Heart right ventricle (tissue), 16 donors: ENCODE measurements at regions of chr5 and their contacts with region 1.

Region 1: DNA sequence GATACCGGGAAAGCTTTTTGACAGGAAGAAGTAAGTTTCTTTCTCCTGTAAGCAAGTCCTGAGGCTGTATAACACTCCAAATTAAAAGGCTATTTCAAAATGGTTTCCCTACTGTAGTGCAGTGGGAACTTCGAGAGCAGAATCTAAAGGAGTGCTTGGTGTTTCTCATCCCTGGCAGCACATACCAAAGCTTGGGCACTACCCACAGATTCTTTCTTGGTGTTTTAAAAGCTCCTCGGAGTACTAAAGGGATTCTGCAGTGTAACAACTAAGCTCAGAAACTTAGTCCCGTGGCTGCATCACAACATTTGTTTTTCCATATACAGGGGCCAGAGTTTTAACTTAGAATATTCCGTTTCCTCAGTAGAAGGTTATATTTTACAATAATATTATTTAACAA is 5.6 kb upstream of the APC start:
- DNase-seq: no peak
- ATAC-seq: no peak
- H3K4me3 ChIP-seq: no peak overlapping the region
- H3K27ac ChIP-seq: no peak overlapping the region
- H3K4me1 ChIP-seq: peaks cover 0 to 14% (median 9%) of the 10 kb centered on the region in 9 donors
- H3K27me3 ChIP-seq: no peaks in the 10 kb centered on the region
- CTCF ChIP-seq: no peak

Region 2: GRCh38 chr5:112663146-112663545 is 69.0 kb before region 1 on chr5:
- intact Hi-C with region 1: loop called in 1 of 10 experiments (anchors 2 kb)
- DNase-seq: no peak
- ATAC-seq: no peak
- H3K4me3 ChIP-seq: no peak overlapping the region
- H3K27ac ChIP-seq: no peak overlapping the region
- H3K4me1 ChIP-seq: no peaks in the 10 kb centered on the region
- H3K27me3 ChIP-seq: no peaks in the 10 kb centered on the region
- CTCF ChIP-seq: no peak